Caco-2 (cell line): ENCODE measurements at regions of chr22 and their contacts with region 1.

Region 1: DNA sequence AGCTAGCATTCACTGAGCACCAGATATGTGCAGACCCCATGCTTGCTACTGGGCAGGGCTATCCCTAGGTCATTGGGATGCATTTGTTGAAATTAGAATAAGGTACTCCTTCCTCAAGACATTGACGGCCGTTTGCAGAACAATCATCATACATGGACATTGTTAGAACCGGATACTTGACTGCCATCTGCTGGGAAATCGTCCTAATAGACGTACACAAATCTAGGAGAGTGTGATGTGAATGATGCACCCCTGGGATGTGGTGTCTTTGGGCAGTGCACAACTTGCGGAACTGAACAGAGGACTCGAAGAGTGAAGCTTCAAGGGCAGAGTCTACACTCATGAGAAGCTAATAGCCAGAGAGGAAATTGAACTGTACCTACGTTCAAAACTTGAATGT is 35.9 kb downstream of the MYO18B start:
- DNase-seq: peak in 1 of 2 experiments; percentile 53
- H3K4me3 ChIP-seq: no peak overlapping the region
- H3K4me3 Mint-ChIP-seq: no peak overlapping the region
- H3K27ac Mint-ChIP-seq: no peak overlapping the region
- H3K4me1 ChIP-seq: no peaks in the 10 kb centered on the region
- H3K4me1 Mint-ChIP-seq: peaks cover 3% of the 10 kb centered on the region
- H3K27me3 ChIP-seq: no peaks in the 10 kb centered on the region
- H3K27me3 Mint-ChIP-seq: peaks cover 3% of the 10 kb centered on the region
- CTCF ChIP-seq: peak; percentile 23 to 47

Region 2: DNA sequence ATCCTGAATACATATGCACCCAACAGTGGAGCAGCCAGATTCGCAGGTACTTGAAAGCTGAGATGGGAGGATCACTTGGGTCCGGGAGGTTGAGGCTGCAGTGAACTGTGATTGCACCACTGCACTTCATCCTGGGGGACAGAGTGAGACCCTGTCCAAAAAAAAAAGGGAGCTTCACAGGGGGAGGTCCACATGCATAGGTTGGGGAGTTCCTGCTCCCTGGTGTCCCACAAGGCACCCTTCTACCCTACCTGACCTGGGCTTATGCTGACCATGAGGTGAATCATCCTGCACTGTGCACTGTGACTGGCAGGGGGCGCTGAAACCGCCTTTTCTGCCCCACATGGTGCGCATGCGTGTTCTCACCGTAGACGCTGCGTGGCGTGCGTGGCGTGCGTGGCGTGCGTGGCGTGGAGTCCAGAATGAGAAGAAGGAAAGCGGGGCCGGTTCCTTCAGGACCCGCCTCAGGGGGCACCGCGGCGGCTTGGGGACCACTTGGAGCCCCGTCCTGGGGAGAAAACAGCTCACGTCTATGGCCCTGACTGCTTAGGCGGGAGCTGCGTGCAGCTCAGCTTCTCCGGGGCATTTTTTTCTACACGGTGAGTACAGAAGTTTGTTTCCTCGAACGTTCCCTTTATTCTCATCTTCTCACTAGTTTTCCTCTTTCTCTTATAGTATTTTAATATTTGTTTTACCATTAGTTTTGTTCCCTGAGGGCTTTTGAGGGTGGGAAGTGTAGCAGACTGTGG is 330.0 kb before region 1 on chr22:
- CTCF ChIA-PET with region 1: no interaction called
- POLR2A ChIA-PET with region 1: no interaction called
- intact Hi-C with region 1: loop called (anchors 5 kb)
- DNase-seq: peak; percentile 83 to 88
- H3K4me3 ChIP-seq: peak overlapping the region; percentile 95
- H3K4me3 Mint-ChIP-seq: peak overlapping the region; percentile 98
- H3K27ac Mint-ChIP-seq: peak overlapping the region; percentile 7
- H3K4me1 ChIP-seq: 0 out of 2 replicates have a peak, but pooled peaks cover 5% of the 10 kb centered on the region
- H3K4me1 Mint-ChIP-seq: peaks cover 7% of the 10 kb centered on the region
- H3K27me3 ChIP-seq: no peaks in the 10 kb centered on the region
- H3K27me3 Mint-ChIP-seq: no peaks in the 10 kb centered on the region
- CTCF ChIP-seq: peak; percentile 85

Region 3: GRCh38 chr22:25567251-25567675 is 210.6 kb before region 1 on chr22:
- CTCF ChIA-PET with region 1: no interaction called
- POLR2A ChIA-PET with region 1: no interaction called
- intact Hi-C with region 1: loop called (anchors 1 kb)
- DNase-seq: no peak
- H3K4me3 ChIP-seq: no peak overlapping the region
- H3K4me3 Mint-ChIP-seq: no peak overlapping the region
- H3K27ac Mint-ChIP-seq: no peak overlapping the region
- H3K4me1 ChIP-seq: no peaks in the 10 kb centered on the region
- H3K4me1 Mint-ChIP-seq: peaks cover 7% of the 10 kb centered on the region
- H3K27me3 ChIP-seq: no peaks in the 10 kb centered on the region
- H3K27me3 Mint-ChIP-seq: no peaks in the 10 kb centered on the region
- CTCF ChIP-seq: no peak

Region 4: GRCh38 chr22:25726241-25726640 is 51.6 kb before region 1 on chr22:
- CTCF ChIA-PET with region 1: interaction called, 10 read pairs
- POLR2A ChIA-PET with region 1: no interaction called
- intact Hi-C with region 1: no loop called
- DNase-seq: peak in 1 of 2 experiments; percentile 26
- H3K4me3 ChIP-seq: no peak overlapping the region
- H3K4me3 Mint-ChIP-seq: peak overlapping the region; percentile 27
- H3K27ac Mint-ChIP-seq: peak overlapping the region; percentile 91
- H3K4me1 ChIP-seq: peaks cover 17% of the 10 kb centered on the region
- H3K4me1 Mint-ChIP-seq: peaks cover 7% of the 10 kb centered on the region
- H3K27me3 ChIP-seq: no peaks in the 10 kb centered on the region
- H3K27me3 Mint-ChIP-seq: no peaks in the 10 kb centered on the region
- CTCF ChIP-seq: no peak

Region 5: DNA sequence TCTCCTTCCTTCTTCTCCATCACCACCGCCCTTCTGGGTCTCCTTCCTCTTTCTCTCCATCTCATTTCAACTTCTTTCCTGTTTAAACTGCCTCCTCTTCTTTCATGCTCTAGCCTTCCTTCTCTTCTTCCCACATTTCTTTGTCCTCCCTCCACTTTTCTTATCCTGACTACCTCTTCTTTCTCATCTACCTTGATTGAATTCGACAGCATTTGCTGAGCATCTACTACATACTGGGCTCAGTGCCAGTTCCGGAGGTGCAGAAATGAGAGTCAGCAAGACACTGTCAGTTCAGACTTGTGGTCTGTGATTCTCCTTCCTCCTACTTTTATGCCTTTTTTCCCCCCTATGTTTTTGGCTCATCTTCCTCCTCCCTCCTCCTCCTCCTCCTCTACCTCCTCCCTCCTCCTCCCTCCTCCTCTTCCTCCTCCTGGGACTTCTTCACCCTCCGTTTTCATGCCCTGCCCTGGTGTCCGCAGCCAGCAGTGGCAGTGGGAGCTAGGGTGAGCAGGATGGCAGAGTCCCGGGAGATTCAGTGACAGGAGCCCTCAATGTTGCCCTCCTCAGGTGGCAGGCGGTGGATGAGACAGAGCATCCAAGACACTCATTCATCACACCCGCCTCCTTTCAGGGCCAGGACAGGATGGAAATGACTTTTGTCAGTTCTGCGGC is 245.4 kb after region 1 on chr22:
- CTCF ChIA-PET with region 1: no interaction called
- POLR2A ChIA-PET with region 1: no interaction called
- intact Hi-C with region 1: no loop called
- DNase-seq: no peak
- H3K4me3 ChIP-seq: no peak overlapping the region
- H3K4me3 Mint-ChIP-seq: no peak overlapping the region
- H3K27ac Mint-ChIP-seq: no peak overlapping the region
- H3K4me1 ChIP-seq: no peaks in the 10 kb centered on the region
- H3K4me1 Mint-ChIP-seq: no peaks in the 10 kb centered on the region
- H3K27me3 ChIP-seq: no peaks in the 10 kb centered on the region; the same call in 1 of the 2 replicates
- H3K27me3 Mint-ChIP-seq: peaks cover 9% of the 10 kb centered on the region
- CTCF ChIP-seq: no peak